ENCODE measurements at regions of chr3 and their contacts with region 1.

Region 1: GRCh38 chr3:66407611-66408218 is 93.1 kb downstream of the LRIG1 start:
- DNase-seq: peak; percentile 60 to 83 (median 78)
- ATAC-seq: peak; percentile 88
- H3K4me3 ChIP-seq: no peak overlapping the region
- H3K27ac ChIP-seq: no peak overlapping the region
- H3K4me1 ChIP-seq: peaks cover 0 to 11% of the 10 kb centered on the region in 2 experiments; a peak in 2 of 5 replicates
- H3K27me3 ChIP-seq: peaks cover 0 to 14% of the 10 kb centered on the region in 2 experiments; a peak in 1 of 5 replicates
- CTCF ChIP-seq: peak; percentile 72 to 76 (median 74)
- EP300 ChIP-seq: no peak
- POLR2A ChIP-seq: no peak
- RAD21 ChIP-seq: peak; percentile 72 to 83

Region 2: GRCh38 chr3:66372681-66373350 is 34.9 kb before region 1 on chr3:
- CTCF ChIA-PET with region 1: no interaction called
- POLR2A ChIA-PET with region 1: no interaction called
- in situ Hi-C with region 1: no loop called
- intact Hi-C with region 1: no loop called
- DNase-seq: peak in 1 of 4 experiments; percentile 4
- ATAC-seq: no peak
- H3K4me3 ChIP-seq: no peak overlapping the region
- H3K27ac ChIP-seq: no peak overlapping the region
- H3K4me1 ChIP-seq: peaks cover 0 to 4% of the 10 kb centered on the region in 2 experiments; a peak in 2 of 5 replicates
- H3K27me3 ChIP-seq: no peaks in the 10 kb centered on the region
- CTCF ChIP-seq: peak in 1 of 3 experiments; percentile 29; a peak in 2 of 6 replicates
- EP300 ChIP-seq: no peak
- POLR2A ChIP-seq: no peak
- RAD21 ChIP-seq: peak in 1 of 2 experiments; percentile 51; a peak in 2 of 4 replicates

Region 3: DNA sequence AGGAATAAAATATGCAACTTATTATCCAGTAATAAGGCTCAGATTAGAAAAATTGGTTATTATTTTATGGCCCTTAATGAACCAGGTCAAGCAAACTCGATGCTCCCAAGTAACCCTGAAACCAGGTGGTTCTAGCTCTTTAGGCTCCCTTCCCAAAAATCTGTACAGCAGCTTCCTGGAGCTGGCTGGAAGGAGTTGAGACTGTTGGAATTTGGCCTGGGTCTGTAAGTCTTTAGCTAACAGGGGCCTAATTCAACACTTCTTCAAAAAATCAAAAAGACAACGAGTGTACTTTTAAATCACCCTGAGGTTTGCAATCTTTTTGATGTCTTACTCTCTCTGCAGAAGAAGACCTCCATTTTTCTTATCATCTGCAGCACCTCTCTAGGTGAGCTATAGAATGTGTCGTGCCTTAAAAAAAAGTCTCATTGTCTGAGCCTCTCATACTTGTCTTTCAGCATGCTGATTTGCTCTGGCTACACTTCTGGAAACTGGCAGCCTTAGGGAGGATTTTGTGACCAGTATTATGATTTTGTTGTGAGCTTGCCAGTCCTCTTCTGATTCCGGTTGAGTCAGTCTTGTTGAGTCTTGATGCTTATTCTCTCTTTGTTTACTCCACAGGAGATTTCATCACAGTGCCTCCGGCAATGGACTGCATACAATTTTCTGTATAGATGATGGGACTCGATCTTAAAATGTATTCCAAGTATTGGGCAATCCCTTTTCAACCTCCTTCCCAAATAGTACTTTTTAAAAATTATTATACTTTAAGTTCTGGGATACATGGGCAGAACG is 355.4 kb after region 1 on chr3:
- CTCF ChIA-PET with region 1: no interaction called
- POLR2A ChIA-PET with region 1: no interaction called
- in situ Hi-C with region 1: no loop called
- intact Hi-C with region 1: no loop called
- DNase-seq: no peak
- ATAC-seq: no peak
- H3K4me3 ChIP-seq: no peak overlapping the region
- H3K27ac ChIP-seq: no peak overlapping the region
- H3K4me1 ChIP-seq: no peaks in the 10 kb centered on the region
- H3K27me3 ChIP-seq: no peaks in the 10 kb centered on the region
- CTCF ChIP-seq: no peak
- EP300 ChIP-seq: no peak
- POLR2A ChIP-seq: no peak
- RAD21 ChIP-seq: no peak

Region 4: DNA sequence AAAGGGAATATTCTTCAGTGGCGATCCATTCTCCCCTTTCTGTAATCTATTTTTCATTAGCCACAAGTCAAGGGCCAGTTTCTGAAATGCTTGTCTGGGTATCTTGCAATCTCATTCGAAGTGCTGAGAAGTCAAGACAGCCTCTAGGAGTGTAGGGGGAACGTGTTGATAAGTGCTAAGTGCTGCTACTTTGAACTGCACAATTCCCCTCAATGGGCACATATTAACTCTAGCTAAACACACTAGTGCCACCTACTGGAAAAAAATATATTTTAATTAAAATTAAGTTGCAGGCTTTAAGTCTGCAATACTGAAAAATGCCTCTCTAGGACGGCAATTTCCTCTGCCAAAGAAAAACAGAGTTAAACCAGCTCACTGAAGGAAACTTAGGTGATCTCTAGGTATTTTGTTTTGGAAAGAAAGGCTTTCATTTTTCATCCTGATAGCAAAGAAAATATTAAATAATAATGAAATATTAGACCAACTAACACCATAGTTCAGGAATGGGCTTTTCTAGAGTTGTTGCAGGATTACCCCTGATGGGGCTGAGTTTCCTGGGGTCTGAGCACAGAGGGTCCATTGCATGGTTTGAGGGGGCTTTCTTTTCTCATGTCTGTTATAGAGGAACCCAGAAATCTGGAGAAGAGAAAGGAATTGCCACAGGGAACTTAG is 408.5 kb after region 1 on chr3:
- CTCF ChIA-PET with region 1: no interaction called
- POLR2A ChIA-PET with region 1: no interaction called
- in situ Hi-C with region 1: loop called (anchors 10 kb)
- intact Hi-C with region 1: loop called (anchors 2 kb)
- DNase-seq: peak; percentile 16 to 27 (median 18)
- ATAC-seq: peak; percentile 78
- H3K4me3 ChIP-seq: no peak overlapping the region
- H3K27ac ChIP-seq: no peak overlapping the region
- H3K4me1 ChIP-seq: no peaks in the 10 kb centered on the region
- H3K27me3 ChIP-seq: no peaks in the 10 kb centered on the region
- CTCF ChIP-seq: peak in 2 of 3 experiments; percentile 23 to 61; a peak in 4 of 6 replicates
- EP300 ChIP-seq: no peak
- POLR2A ChIP-seq: no peak
- RAD21 ChIP-seq: peak; percentile 69 to 74

Region 5: DNA sequence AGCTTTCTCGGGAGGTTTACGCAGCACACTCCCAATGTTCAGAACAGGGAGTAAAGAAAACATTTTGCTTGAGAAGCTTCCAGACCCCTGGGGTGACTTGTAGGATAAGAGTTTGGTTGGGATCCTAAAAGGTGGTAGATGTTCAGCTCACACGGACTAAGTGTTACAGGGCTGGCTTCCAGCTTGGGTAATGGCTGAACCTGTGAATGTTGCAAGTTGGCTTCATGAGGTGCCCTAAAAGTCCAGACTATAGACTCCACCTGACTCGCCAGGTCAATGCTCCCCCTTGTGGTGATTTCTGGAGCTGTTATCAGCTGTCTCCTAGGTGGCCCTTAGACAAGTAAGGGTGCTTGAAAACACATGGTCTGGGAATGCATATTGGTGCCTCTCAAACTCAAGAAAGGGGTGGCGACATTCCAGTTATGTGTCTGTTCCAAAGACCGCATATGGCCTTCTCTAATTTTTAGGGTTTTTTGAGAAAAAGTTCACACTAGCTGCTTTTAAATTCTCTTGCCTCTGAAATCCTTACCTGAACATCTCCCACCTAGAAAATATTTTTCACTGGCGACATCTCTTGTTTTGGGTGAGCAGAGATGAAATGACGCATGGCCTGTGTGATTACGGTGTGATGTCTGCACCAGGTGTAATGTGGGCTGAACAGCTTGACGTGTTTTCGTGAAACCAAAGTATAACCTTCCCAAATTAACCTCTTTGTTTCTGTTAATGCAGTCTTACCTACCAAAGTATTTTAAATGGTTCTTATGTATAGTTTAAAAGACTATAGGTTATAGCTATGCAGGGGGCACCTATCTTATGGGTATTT is 414.7 kb after region 1 on chr3:
- CTCF ChIA-PET with region 1: no interaction called
- POLR2A ChIA-PET with region 1: no interaction called
- in situ Hi-C with region 1: loop called (anchors 10 kb)
- intact Hi-C with region 1: no loop called
- DNase-seq: peak; percentile 39 to 68 (median 64)
- ATAC-seq: peak; percentile 88
- H3K4me3 ChIP-seq: no peak overlapping the region
- H3K27ac ChIP-seq: no peak overlapping the region
- H3K4me1 ChIP-seq: no peaks in the 10 kb centered on the region
- H3K27me3 ChIP-seq: no peaks in the 10 kb centered on the region
- CTCF ChIP-seq: peak; percentile 61 to 68 (median 62)
- EP300 ChIP-seq: no peak
- POLR2A ChIP-seq: no peak
- RAD21 ChIP-seq: peak; percentile 36 to 59; a peak in 3 of 4 replicates